Left cardiac atrium (tissue), 4 donors: ENCODE measurements at regions of chr17 and their contacts with region 1.

Region 1: GRCh38 chr17:20315821-20316220 is 151.5 kb downstream of the LGALS9B start:
- DNase-seq: no peak
- ATAC-seq: no peak

Region 2: GRCh38 chr17:19992803-19993713 is 322.8 kb before region 1 on chr17:
- intact Hi-C with region 1: loop called (anchors 10 kb)
- DNase-seq: peak; percentile 89
- ATAC-seq: peak; percentile 98

Region 3: DNA sequence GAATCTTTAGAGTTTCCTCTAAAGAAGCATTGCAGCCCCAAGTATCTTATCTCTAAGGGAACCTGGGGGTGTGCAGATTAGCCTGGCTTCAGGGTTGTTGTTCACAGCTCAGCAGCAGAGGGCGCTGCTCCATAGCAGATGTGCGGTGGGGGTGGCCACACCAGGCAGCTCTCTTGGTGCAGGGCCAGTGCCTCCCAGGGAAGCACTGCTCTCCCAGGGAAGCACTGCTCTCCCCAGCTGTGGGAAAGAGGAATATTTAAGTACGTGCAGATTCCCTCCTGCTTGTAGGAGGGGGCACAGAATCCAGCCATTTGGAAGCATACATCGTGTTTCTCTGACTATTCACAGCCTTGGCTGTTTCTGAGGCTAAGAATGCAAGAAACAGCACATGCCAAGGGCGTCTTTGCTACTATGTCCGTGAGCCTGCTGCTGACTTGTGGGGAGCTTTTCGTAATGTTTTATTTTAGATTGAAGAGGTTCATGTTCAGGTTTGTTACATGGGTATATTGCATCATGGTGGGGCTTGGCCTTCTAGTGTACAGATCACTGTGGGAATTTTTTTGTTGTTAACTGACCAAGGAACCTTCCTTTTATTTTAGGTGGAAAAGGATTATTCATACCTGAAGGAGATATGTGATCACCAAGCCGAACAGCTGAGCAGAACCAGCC is 88.9 kb before region 1 on chr17:
- intact Hi-C with region 1: loop called (anchors 5 to 10 kb)
- DNase-seq: peak; percentile 87
- ATAC-seq: peak; percentile 97 to 98

Region 4: GRCh38 chr17:20234276-20234675 is 81.5 kb before region 1 on chr17:
- intact Hi-C with region 1: loop called (anchors 5 to 10 kb)
- DNase-seq: no peak
- ATAC-seq: no peak

Region 5: DNA sequence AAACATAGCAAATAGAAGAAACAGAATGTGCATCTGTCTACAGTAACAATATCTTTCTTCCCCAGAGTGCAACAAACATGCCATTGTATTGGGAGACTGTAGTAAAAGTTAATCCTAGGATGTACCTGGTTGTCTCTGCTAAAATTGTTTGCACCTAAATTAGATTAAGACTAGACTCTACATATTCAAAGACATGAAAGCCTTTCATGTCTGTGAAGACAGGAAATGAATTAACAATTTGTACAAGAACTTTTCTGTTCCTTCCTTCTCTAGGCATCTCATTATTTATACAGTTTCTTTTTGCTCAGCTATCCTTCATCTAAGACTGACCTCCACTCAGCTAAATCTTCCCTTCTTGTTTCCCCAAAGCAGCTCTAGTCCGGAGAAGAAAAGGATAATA is 69.1 kb before region 1 on chr17:
- intact Hi-C with region 1: no loop called
- DNase-seq: no peak
- ATAC-seq: no peak